ENCODE measurements at regions of chr14 and their contacts with region 1.

Region 1: DNA sequence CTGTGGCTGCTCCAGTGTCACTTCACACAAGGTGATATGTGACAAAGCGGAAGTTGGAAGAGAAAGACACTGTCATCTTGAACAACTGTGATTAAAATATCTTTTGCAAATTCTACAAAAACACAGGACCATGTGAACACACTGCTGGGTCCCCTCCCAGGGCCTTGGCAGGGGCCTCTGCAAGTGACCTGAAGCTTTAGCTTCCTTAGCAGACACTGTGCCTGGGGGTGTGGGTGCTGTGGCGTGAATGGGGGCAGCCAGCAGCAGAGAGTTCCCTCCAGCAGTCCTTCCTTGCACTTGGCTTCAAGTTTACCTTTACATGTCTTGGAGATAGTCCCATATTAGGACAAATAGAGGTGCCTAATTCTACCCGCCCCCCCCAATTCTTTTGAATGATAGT is 5.0 kb upstream of the NYNRIN start:
- DNase-seq: no peak
- CTCF ChIP-seq: no peak

Region 2: GRCh38 chr14:24171422-24172260 is 222.2 kb before region 1 on chr14 and contains the start of gene REC8:
- CTCF ChIA-PET with region 1: no interaction called
- POLR2A ChIA-PET with region 1: interaction called, 11 read pairs
- DNase-seq: peak; percentile 91
- CTCF ChIP-seq: no peak

Region 3: GRCh38 chr14:24504425-24504950 is 110.7 kb after region 1 on chr14:
- CTCF ChIA-PET with region 1: no interaction called
- POLR2A ChIA-PET with region 1: no interaction called
- DNase-seq: no peak
- CTCF ChIP-seq: no peak